Activated T-helper 2 cell treated with anti-CD3 and anti-CD28 coated beads, Interferon-gamma antibody, Interleukin-2, Interleukin-4, amounts not matched to agents 10 μg/mL and 5 μg/mL and 100 μg/mL, durations not matched to agents 14 hours and 24 hours and 36 hours (primary cell): ENCODE measurements at regions of chr21 and their contacts with region 1.

Region 1: DNA sequence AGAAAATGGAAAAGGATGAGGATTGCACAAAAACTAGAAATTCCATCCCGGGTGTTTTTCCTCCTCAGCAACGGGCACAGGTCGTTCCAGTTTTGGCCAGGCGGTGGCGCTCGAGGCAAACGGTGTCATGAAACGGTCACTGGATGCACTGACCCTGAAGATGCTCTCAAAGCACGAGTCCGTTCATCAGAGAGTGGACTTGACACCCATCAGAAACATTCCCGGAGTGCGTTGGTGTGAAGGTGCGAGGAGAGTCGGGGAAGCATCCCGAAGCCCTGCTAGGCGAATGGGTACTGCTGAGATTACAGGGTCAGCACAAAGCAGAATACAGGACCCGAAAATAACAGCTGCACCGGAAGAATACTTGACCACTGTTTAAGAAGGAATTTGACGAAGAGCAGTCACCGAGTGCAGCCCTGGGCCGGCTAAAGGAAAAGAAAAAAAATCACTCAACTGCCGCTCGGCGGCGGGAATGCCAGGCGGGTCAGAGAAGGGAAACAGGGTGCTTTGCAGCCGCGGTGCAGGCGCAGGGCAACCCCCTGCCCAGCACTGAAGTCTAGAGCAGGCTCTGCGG is 71.7 kb upstream of the ETS2 start:
- DNase-seq: peak; percentile 48
- H3K4me3 Mint-ChIP-seq: peak overlapping the region; percentile 74
- H3K27ac Mint-ChIP-seq: no peak overlapping the region
- H3K4me1 Mint-ChIP-seq: peaks cover 20% of the 10 kb centered on the region
- H3K27me3 Mint-ChIP-seq: peaks cover 11% of the 10 kb centered on the region

Region 2: DNA sequence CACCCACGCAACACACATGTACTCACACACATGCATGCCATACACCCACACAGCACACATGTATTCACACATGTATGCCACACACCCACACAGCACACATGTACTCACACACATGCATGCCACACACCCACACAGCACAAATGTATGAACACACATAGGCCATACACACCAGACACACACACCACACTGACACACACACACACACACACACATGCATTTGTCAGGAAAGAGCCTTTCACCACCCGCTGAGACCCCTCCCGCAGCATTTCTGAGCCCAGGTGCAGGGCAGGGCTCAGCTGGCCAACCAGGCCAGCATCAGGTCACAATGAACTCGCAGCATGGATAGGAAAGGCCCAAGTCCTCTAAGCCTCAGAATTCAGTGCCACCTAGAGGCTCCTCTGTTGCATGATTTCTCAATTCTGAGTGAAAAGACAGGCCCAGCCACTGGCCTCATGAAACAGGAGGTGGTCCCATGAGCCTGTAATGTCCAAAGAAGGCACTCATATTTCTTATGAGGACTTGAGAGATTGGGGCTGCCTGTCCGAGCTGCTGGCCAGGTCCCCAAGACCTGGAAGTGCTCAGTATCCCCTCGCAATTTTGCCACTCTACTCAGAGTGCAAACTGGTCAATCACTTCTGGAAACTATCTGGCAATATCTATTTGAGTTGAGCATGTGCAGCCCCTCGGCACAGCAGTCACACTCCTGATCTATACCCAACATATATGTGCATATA is 391.9 kb after region 1 on chr21:
- intact Hi-C with region 1: loop called (anchors 2 kb)
- DNase-seq: no peak
- H3K4me3 Mint-ChIP-seq: no peak overlapping the region
- H3K27ac Mint-ChIP-seq: no peak overlapping the region
- H3K4me1 Mint-ChIP-seq: peaks cover 14% of the 10 kb centered on the region
- H3K27me3 Mint-ChIP-seq: peaks cover 19% of the 10 kb centered on the region

Region 3: DNA sequence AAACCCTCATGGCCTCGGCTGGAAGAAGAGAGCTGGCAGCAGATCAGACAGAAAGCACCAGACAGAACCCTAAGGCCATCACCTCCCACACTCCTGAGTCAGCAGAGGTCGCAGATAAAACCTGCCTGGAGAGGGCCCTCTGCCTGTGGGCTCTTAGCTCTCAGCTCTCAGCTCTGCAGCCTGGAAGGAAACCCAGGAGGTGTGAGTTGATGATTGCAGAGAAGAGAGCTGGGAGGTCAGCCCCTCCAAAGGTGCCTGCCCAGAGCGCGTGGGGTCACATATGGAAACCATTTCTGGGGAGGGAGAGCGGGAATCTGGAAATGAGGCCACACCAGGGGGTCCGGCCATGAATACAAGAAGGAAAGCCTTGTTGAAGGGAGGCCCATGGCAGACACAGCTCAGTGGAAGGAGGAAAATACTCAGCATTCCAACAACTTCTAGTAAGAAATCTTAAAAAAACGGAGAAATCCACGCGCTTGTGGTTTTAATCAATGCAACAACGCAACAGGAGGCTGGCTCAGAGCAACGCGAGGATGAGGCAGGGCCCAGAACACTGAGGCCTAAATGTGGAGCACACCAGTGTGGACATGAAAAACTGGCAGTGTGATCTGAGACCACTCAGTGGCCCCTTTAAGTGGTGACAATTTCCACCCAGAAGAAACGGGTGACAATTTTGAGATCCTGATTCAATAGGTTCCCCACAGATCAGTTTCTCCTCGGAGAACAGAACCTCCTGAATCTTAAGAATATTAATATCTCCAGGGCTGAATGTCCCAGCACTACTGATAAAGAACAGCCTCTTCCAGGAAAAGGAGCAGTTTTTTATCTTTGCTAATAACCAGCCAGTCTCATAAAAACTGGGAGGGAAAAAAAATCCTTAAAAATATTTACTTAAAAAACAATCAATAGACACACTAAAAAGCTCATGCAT is 403.5 kb after region 1 on chr21:
- intact Hi-C with region 1: loop called (anchors 1 kb)
- DNase-seq: no peak
- H3K4me3 Mint-ChIP-seq: no peak overlapping the region
- H3K27ac Mint-ChIP-seq: no peak overlapping the region
- H3K4me1 Mint-ChIP-seq: peaks cover 7% of the 10 kb centered on the region
- H3K27me3 Mint-ChIP-seq: peaks cover 1% of the 10 kb centered on the region